Activated T-helper 2 cell treated with anti-CD3 and anti-CD28 coated beads, Interferon-gamma antibody, Interleukin-2, Interleukin-4, amounts not matched to agents 10 μg/mL and 5 μg/mL and 100 μg/mL, durations not matched to agents 14 hours and 24 hours and 36 hours (primary cell): ENCODE measurements at regions of chr3 and their contacts with region 1.

Region 1: GRCh38 chr3:190566043-190566933 is 52.4 kb downstream of the IL1RAP start:
- DNase-seq: peak; percentile 70
- H3K4me3 Mint-ChIP-seq: peak overlapping the region; percentile 38
- H3K27ac Mint-ChIP-seq: peak overlapping the region; percentile 91
- H3K4me1 Mint-ChIP-seq: peaks cover 81% of the 10 kb centered on the region
- H3K27me3 Mint-ChIP-seq: no peaks in the 10 kb centered on the region

Region 2: GRCh38 chr3:190306513-190307165 is 259.6 kb before region 1 on chr3:
- intact Hi-C with region 1: loop called (anchors 2 kb)
- DNase-seq: no peak
- H3K4me3 Mint-ChIP-seq: peak overlapping the region; percentile 11
- H3K27ac Mint-ChIP-seq: peak overlapping the region; percentile 85
- H3K4me1 Mint-ChIP-seq: peaks cover 35% of the 10 kb centered on the region
- H3K27me3 Mint-ChIP-seq: no peaks in the 10 kb centered on the region

Region 3: DNA sequence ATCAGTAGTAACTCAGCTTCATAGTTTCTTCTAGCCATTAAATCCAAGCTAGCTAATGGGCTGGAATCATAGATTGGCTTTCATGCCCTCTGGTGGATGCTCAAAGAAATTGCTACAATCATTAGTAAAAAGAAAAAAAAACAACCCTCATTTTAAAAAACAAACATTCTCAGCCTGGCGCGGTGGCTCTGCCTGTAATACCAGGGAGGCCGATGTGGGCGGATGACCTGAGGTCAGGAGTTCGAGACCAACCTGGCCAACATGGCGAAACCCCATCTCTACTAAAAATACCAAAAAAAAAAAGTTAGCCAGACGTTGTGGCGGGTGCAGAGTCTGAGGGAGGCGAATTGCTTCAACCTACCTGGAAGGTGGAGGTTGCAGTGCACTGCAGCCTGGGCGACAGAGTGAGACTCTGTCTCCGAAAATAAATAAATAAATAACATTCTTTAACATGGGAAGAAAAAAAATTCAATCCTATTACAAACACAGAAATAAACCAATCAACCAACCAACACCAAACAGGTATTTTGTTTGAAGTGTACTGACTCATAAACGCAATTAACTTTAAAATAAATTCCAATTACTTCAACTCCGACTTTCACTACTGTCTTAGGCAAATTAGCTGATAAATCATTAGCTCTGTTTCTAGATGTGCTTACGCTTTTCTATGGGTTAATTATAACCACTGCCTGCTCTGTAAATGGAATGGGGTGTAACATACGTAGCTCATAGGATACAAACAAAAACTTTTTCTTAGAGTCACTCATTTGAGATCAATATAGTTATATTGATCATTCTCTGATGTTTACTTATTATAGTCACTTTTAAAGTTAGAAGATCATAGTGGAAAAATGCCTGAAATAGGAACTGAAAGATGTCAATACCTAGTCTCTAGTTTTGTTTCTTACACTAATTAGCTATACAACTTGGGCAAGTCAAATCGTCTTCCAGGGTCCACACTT is 141.5 kb before region 1 on chr3:
- intact Hi-C with region 1: no loop called
- DNase-seq: peak; percentile 28
- H3K4me3 Mint-ChIP-seq: no peak overlapping the region
- H3K27ac Mint-ChIP-seq: peak overlapping the region; percentile 38
- H3K4me1 Mint-ChIP-seq: peaks cover 6% of the 10 kb centered on the region
- H3K27me3 Mint-ChIP-seq: peaks cover 11% of the 10 kb centered on the region

Region 4: DNA sequence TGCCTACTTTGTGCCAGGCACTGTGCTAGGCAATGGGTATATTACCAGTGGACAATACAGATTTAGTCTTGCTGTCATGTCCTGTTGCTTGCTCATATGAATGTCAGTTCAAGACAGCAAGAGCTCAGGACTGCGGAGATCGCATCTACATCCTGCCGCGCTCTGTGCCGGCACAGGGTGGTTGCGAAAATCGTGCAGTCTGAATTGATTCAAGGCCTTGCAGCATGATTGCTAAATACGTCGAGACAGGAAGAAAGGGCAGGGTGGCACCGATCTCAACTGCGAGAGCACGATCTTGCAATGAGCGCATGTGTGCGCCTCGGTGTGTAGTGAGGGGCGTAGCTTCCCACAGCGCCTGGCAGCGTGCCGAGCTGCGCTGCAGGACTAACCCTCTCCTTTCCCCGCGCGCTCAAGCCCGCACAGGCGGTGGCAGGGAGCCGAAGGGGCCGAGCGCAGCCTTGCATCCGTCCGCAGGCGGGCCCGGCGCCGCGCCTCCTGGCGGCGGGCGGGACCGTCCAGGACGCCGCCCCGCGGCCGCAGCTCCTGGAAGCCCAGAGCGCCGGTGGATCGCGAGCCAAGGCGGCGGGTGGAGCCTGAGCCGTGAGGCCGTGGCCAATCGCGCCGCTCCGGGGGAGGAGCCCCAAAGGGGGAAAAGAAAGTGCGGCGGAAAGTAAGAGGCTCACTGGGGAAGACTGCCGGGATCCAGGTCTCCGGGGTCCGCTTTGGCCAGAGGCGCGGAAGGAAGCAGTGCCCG is 52.7 kb before region 1 on chr3 and contains the start of gene IL1RAP:
- intact Hi-C with region 1: loop called (anchors 1 kb)
- DNase-seq: peak; percentile 89
- H3K4me3 Mint-ChIP-seq: peak within 1 kb of the TSS; percentile 90
- H3K27ac Mint-ChIP-seq: peak within 1 kb of the TSS; percentile 97
- H3K4me1 Mint-ChIP-seq: peaks cover 39% of the 10 kb centered on the region
- H3K27me3 Mint-ChIP-seq: no peaks in the 10 kb centered on the region
- total RNA-seq, gene IL1RAP: 34.5 and 38.6 TPM in 2 replicates

Region 5: DNA sequence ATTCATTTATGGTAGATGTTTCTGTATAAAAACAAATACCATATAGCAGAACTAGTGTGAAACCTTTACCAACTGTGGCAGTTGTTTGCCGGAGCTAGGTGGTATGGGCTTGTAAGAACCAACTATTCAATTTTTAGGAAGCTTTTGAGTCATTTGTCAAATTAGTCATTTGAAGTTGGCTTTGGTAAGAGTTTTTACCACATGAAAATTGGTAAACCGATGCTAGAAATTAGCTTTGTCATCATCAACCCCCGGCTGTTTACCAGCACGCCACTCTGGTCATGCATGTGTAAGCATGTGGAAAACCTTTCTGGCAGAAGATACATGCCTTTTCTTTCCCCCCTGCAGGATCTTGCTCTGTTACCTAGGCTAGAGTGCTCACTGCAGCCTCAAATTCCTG is 10.9 kb after region 1 on chr3:
- intact Hi-C with region 1: loop called (anchors 1 kb)
- DNase-seq: no peak
- H3K4me3 Mint-ChIP-seq: no peak overlapping the region
- H3K27ac Mint-ChIP-seq: peak overlapping the region; percentile 60
- H3K4me1 Mint-ChIP-seq: peaks cover 70% of the 10 kb centered on the region
- H3K27me3 Mint-ChIP-seq: no peaks in the 10 kb centered on the region

Region 6: DNA sequence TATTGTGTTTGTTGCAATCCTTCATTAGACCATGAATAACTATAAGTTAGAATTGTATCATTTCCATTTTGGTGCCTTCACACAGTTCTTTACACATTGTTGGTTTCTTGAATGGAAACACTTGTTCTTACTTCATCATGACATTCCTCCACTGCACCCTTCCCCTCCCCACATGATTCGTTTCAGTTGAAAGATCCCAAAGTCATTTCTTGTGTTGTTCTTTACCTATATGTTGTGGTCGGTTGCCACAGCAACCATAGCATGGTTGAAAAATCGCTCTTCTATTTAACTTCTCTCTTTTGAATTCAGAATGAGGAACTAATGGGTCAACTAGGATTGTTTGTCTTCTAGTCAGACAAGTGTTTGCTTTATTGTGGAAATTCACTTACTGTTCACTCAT is 50.9 kb after region 1 on chr3:
- intact Hi-C with region 1: loop called (anchors 1 kb)
- DNase-seq: peak; percentile 50
- H3K4me3 Mint-ChIP-seq: peak overlapping the region; percentile 40
- H3K27ac Mint-ChIP-seq: peak overlapping the region; percentile 97
- H3K4me1 Mint-ChIP-seq: peaks cover 77% of the 10 kb centered on the region
- H3K27me3 Mint-ChIP-seq: no peaks in the 10 kb centered on the region